ENCODE measurements at regions of chr5 and their contacts with region 1.

Region 1: GRCh38 chr5:134586866-134587524 is 45.6 kb downstream of the SAR1B start:
- DNase-seq: peak; percentile 81
- ATAC-seq: peak; percentile 92
- H3K4me3 ChIP-seq: peak overlapping the region; percentile 40 to 76 (median 68)
- H3K27ac ChIP-seq: peak overlapping the region; percentile 59
- H3K4me1 ChIP-seq: peaks cover 35% of the 10 kb centered on the region
- H3K27me3 ChIP-seq: no peaks in the 10 kb centered on the region
- CTCF ChIP-seq: peak; percentile 85
- EP300 ChIP-seq: no peak
- POLR2A ChIP-seq: no peak
- RAD21 ChIP-seq: peak; percentile 46

Region 2: DNA sequence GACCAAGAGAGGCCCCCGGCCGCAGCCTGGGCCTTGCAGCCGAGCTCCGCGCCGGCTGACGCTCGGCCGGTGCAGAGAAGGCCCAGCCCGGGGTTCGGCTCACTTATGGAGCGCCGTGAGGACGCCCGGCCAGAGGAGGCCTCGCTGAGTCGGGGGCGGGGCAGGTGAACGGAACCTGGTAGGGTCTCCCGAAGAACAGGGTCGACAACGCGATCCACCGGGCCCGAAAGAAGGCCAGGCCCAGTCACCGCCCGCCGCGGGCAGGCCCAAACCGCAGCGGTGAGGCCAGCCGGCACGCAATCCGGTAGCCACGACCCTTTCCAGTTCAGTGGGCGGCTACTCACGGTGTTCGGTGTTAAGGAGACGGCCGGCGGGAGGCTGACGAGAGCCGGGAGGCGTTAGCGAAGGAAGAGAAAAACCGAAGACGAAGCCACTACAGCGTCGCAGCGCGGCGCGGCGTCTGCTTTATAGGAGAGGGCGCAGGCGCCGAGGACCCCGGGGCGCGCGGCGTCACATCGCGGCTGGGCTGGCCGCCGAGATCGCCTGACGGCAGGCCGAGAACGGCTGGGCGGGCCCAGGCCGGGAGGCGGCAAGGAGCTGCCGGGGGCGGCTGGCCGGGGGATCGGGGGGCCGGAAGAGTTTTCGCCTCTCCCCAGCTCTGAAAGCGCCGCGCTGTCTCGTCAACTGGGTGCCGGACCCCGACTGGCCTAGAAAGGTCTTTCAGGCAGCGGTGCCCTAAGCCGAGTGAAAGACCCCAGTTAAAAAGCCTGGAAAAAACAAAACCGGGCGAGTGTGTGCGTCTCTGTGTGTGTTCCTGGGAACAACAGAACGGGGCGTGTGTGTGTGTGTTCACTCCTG is 410.3 kb before region 1 on chr5 and contains the start of gene SKP1:
- CTCF ChIA-PET with region 1: no interaction called
- POLR2A ChIA-PET with region 1: interaction called, 4 read pairs
- in situ Hi-C with region 1: loop called (anchors 25 kb)
- intact Hi-C with region 1: no loop called
- DNase-seq: peak; percentile 68
- ATAC-seq: peak; percentile 78
- H3K4me3 ChIP-seq: peak within 1 kb of the TSS; percentile 95 to 97 (median 97)
- H3K27ac ChIP-seq: peak within 1 kb of the TSS; percentile 98
- H3K4me1 ChIP-seq: peaks cover 45% of the 10 kb centered on the region
- H3K27me3 ChIP-seq: no peaks in the 10 kb centered on the region
- CTCF ChIP-seq: peak; percentile 33
- EP300 ChIP-seq: no peak
- POLR2A ChIP-seq: peak; percentile 94 to 99
- RAD21 ChIP-seq: no peak
- total RNA-seq, gene SKP1: 340 and 507 TPM in 2 replicates

Region 3: DNA sequence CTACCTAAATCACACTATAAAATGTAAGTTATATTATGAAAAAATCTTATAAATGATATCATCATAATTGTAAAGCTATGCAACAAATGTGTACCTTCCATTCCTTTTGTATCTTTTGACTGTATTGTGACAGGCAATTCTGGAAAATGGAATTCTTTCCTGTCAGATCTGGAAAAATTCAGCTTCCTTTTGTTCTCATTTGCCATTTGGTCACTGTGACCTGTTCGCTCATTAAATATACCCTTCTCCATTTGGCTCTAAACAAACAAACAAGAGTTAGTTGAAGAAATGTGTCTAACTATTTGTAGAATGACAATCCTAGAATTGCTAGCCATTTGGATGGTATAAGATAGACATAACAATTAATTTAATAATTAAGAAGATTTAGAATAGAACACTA is 282.7 kb before region 1 on chr5:
- CTCF ChIA-PET with region 1: interaction called, 13 read pairs
- POLR2A ChIA-PET with region 1: no interaction called
- in situ Hi-C with region 1: no loop called
- intact Hi-C with region 1: no loop called
- DNase-seq: no peak
- ATAC-seq: no peak
- H3K4me3 ChIP-seq: no peak overlapping the region
- H3K27ac ChIP-seq: no peak overlapping the region
- H3K4me1 ChIP-seq: peaks cover 16% of the 10 kb centered on the region
- H3K27me3 ChIP-seq: no peaks in the 10 kb centered on the region
- CTCF ChIP-seq: no peak
- EP300 ChIP-seq: no peak
- POLR2A ChIP-seq: no peak
- RAD21 ChIP-seq: no peak

Region 4: DNA sequence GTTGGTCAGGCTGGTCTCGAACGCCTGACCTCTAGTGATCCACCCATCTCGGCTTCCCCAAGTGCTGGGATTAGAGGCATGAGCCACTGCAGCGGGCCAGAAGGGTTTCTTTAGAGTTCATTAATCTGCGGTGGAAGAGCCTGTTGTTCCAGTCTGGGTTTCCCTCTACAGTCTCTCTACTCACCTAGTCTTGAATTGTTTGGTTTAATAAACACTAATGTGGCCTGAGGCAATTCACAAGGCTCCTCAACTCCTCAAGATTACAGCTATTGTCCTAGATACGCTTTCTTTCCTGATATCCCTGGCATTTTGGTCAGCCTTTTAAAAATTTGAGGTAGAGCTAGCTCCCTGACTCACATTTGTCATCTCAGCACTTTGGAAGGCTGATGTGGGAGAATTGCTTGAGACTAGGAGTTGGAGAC is 50.2 kb after region 1 on chr5:
- CTCF ChIA-PET with region 1: no interaction called
- POLR2A ChIA-PET with region 1: interaction called, 3 read pairs
- in situ Hi-C with region 1: no loop called
- intact Hi-C with region 1: loop called (anchors 2 kb)
- DNase-seq: no peak
- ATAC-seq: no peak
- H3K4me3 ChIP-seq: no peak overlapping the region
- H3K27ac ChIP-seq: peak overlapping the region; percentile 76
- H3K4me1 ChIP-seq: peaks cover 77% of the 10 kb centered on the region
- H3K27me3 ChIP-seq: no peaks in the 10 kb centered on the region; a peak in 1 of 5 replicates
- CTCF ChIP-seq: no peak
- EP300 ChIP-seq: no peak
- POLR2A ChIP-seq: no peak
- RAD21 ChIP-seq: no peak

Region 5: GRCh38 chr5:134648425-134649162 is 61.6 kb after region 1 on chr5 and contains the start of gene SEC24A:
- CTCF ChIA-PET with region 1: no interaction called
- POLR2A ChIA-PET with region 1: interaction called, 10 read pairs
- in situ Hi-C with region 1: no loop called
- intact Hi-C with region 1: loop called (anchors 2 kb)
- DNase-seq: peak; percentile 89
- ATAC-seq: peak; percentile 93
- H3K4me3 ChIP-seq: peak within 1 kb of the TSS; percentile 79 to 97 (median 97)
- H3K27ac ChIP-seq: peak within 1 kb of the TSS; percentile 99
- H3K4me1 ChIP-seq: peaks cover 67% of the 10 kb centered on the region
- H3K27me3 ChIP-seq: no peaks in the 10 kb centered on the region
- CTCF ChIP-seq: no peak; the same call in 1 of the 2 replicates
- EP300 ChIP-seq: peak in 1 of 2 experiments; percentile 46; a peak in 1 of 4 replicates
- POLR2A ChIP-seq: peak; percentile 69 to 88
- RAD21 ChIP-seq: peak; percentile 71
- total RNA-seq, gene SEC24A: 30.5 and 56.6 TPM in 2 replicates

Region 6: GRCh38 chr5:134989266-134989830 is 402.4 kb after region 1 on chr5:
- CTCF ChIA-PET with region 1: no interaction called
- POLR2A ChIA-PET with region 1: no interaction called
- in situ Hi-C with region 1: no loop called
- intact Hi-C with region 1: no loop called
- DNase-seq: no peak
- ATAC-seq: no peak
- H3K4me3 ChIP-seq: no peak overlapping the region
- H3K27ac ChIP-seq: no peak overlapping the region
- H3K4me1 ChIP-seq: no peaks in the 10 kb centered on the region
- H3K27me3 ChIP-seq: no peaks in the 10 kb centered on the region
- CTCF ChIP-seq: no peak
- EP300 ChIP-seq: no peak
- POLR2A ChIP-seq: no peak
- RAD21 ChIP-seq: no peak